Mucosa of descending colon (tissue), 3 donors: ENCODE measurements at regions of chr5 and their contacts with region 1.

Region 1: GRCh38 chr5:36882250-36882649 is 5.7 kb downstream of the NIPBL start:
- DNase-seq: no peak
- ATAC-seq: no peak
- H3K4me3 ChIP-seq: no peak overlapping the region
- H3K4me1 ChIP-seq: peaks cover 22% of the 10 kb centered on the region
- CTCF ChIP-seq: no peak

Region 2: GRCh38 chr5:36692791-36693763 is 189.2 kb before region 1 on chr5:
- intact Hi-C with region 1: no loop called
- DNase-seq: peak; percentile 66 to 69 (median 69)
- ATAC-seq: peak; percentile 73
- H3K4me3 ChIP-seq: no peak overlapping the region
- H3K4me1 ChIP-seq: peaks cover 10% of the 10 kb centered on the region
- CTCF ChIP-seq: no peak

Region 3: GRCh38 chr5:36944607-36945225 is 62.5 kb after region 1 on chr5:
- intact Hi-C with region 1: loop called in 1 of 2 experiments (anchors 10 kb)
- DNase-seq: no peak
- ATAC-seq: no peak
- H3K4me3 ChIP-seq: no peak overlapping the region
- H3K4me1 ChIP-seq: peaks cover 13% of the 10 kb centered on the region
- CTCF ChIP-seq: no peak

Region 4: DNA sequence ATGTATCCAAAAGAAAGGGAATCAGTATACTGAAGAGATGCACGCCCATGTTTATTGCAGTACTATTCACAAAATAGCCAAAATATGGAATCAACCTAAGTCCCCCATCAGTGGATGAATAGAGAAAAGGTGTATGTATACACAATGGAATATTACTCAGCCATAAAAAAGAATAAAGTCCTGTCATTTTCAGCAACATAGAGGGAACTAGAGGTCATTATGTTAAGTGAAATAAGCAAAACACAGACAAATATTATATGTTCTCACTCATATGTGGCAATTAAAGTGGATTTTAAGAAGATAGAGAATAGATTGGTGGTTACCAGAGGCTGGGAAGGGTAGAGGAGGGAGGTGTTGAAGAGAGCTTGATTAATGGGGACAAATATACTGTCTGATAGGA is 82.9 kb after region 1 on chr5:
- intact Hi-C with region 1: no loop called
- DNase-seq: no peak
- ATAC-seq: no peak
- H3K4me3 ChIP-seq: no peak overlapping the region
- H3K4me1 ChIP-seq: no peaks in the 10 kb centered on the region
- CTCF ChIP-seq: no peak

Region 5: GRCh38 chr5:37153661-37154060 is 271.4 kb after region 1 on chr5:
- intact Hi-C with region 1: no loop called
- DNase-seq: no peak
- ATAC-seq: no peak
- H3K4me3 ChIP-seq: no peak overlapping the region
- H3K4me1 ChIP-seq: no peaks in the 10 kb centered on the region
- CTCF ChIP-seq: no peak